Activated CD4-positive, alpha-beta T cell treated with anti-CD3 and anti-CD28 coated beads for 36 hours (primary cell): ENCODE measurements at regions of chr6 and their contacts with region 1.

Region 1: GRCh38 chr6:79078075-79079025 is at the start of gene PHIP:
- DNase-seq: peak; percentile 95
- ATAC-seq: peak; percentile 82
- H3K4me3 Mint-ChIP-seq: peak within 1 kb of the TSS; percentile 89
- H3K27ac Mint-ChIP-seq: peak within 1 kb of the TSS; percentile 96
- H3K4me1 Mint-ChIP-seq: peaks cover 34% of the 10 kb centered on the region
- H3K27me3 Mint-ChIP-seq: peaks cover 7% of the 10 kb centered on the region
- total RNA-seq, gene PHIP: 24.8 to 25.5 TPM

Region 2: DNA sequence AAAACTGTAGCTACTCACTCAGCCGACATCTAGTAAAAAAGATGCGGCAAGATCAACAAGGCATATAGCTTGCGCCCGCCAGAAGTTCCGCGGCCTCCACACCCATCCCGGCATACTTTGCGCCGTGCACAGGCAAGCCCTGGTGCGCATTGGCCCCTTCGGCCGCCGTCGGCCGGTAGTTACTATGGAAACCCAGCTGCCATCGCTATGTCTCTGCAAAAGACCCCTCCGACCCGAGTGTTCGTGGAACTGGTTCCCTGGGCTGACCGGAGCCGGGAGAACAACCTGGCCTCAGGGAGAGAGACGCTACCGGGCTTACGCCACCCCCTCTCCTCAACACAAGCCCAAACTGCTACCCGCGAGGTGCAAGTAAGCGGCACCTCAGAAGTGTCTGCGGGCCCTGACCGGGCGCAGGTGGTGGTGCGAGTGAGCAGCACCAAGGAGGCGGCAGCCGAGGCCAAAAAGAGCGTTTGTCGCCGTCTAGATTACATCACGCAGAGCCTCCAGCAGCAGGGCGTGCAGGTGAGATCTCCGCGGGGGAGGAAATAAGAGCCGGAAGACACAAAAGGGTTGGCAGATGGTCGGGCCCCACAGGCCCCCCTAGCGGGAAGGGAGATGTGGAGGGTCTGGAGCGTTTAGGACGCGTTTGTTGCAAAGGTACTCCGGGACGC is 210.8 kb before region 1 on chr6 and contains the start of gene IRAK1BP1:
- CTCF ChIA-PET with region 1: interaction called, 3 read pairs
- POLR2A ChIA-PET with region 1: no interaction called
- intact Hi-C with region 1: loop called (anchors 1 to 5 kb)
- DNase-seq: peak; percentile 93
- ATAC-seq: peak; percentile 99
- H3K4me3 Mint-ChIP-seq: peak within 1 kb of the TSS; percentile 92
- H3K27ac Mint-ChIP-seq: peak within 1 kb of the TSS; percentile 79
- H3K4me1 Mint-ChIP-seq: peaks cover 15% of the 10 kb centered on the region
- H3K27me3 Mint-ChIP-seq: no peaks in the 10 kb centered on the region
- total RNA-seq, gene IRAK1BP1: 1.6 to 2.7 TPM

Region 3: GRCh38 chr6:78908621-78909020 is 169.7 kb before region 1 on chr6:
- CTCF ChIA-PET with region 1: no interaction called
- POLR2A ChIA-PET with region 1: no interaction called
- intact Hi-C with region 1: no loop called
- DNase-seq: no peak
- ATAC-seq: no peak
- H3K4me3 Mint-ChIP-seq: no peak overlapping the region
- H3K27ac Mint-ChIP-seq: no peak overlapping the region
- H3K4me1 Mint-ChIP-seq: peaks cover 10% of the 10 kb centered on the region
- H3K27me3 Mint-ChIP-seq: peaks cover 31% of the 10 kb centered on the region

Region 4: DNA sequence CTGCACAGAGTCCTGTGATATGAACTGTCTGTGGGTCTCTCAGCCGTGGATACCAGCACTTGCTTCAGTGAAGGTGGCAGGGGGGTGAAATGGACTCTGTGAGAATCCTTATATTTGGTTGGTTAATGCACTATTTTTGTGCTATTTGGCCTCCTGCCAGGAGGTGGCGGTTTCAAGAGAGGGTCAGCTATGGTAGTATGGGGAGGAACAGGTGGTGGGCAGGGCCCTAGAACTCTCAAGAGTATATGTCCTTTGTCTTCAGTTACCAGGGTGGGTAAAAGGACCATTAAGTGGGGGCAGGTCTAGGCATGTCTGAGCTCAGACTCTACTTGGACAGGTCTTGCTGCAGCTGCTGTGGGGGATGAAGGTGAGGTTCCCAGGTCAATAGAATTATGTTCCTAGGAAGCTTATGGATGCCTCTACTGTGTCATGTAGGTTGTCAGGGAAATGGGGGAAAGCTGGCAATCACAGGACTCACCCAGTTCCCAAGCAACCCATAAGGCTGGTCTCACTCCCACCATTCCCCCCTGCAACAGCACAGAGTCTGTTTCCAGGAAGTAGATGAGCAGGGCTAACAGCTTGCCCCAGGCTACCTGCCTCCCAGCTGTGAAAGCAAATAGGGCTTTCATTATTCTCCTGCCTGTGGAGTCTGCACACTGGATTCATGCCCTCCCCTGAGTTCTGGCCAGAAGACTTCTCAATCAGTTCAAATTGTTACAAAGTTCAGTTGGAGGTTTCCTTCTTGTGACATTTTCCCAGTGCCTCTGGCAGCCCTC is 56.5 kb after region 1 on chr6:
- CTCF ChIA-PET with region 1: no interaction called
- POLR2A ChIA-PET with region 1: no interaction called
- intact Hi-C with region 1: no loop called
- DNase-seq: no peak
- ATAC-seq: no peak
- H3K4me3 Mint-ChIP-seq: no peak overlapping the region
- H3K27ac Mint-ChIP-seq: no peak overlapping the region
- H3K4me1 Mint-ChIP-seq: no peaks in the 10 kb centered on the region
- H3K27me3 Mint-ChIP-seq: peaks cover 25% of the 10 kb centered on the region

Region 5: GRCh38 chr6:79233611-79234149 is 155.3 kb after region 1 on chr6:
- CTCF ChIA-PET with region 1: no interaction called
- POLR2A ChIA-PET with region 1: no interaction called
- intact Hi-C with region 1: loop called (anchors 1 kb)
- DNase-seq: peak; percentile 83
- ATAC-seq: peak; percentile 68
- H3K4me3 Mint-ChIP-seq: peak overlapping the region; percentile 98
- H3K27ac Mint-ChIP-seq: peak overlapping the region; percentile 92
- H3K4me1 Mint-ChIP-seq: peaks cover 16% of the 10 kb centered on the region
- H3K27me3 Mint-ChIP-seq: peaks cover 2% of the 10 kb centered on the region

Region 6: GRCh38 chr6:79466207-79466834 is 388.0 kb after region 1 on chr6:
- CTCF ChIA-PET with region 1: no interaction called
- POLR2A ChIA-PET with region 1: no interaction called
- intact Hi-C with region 1: loop called in 1 of 2 experiments (anchors 5 kb)
- DNase-seq: no peak
- ATAC-seq: no peak
- H3K4me3 Mint-ChIP-seq: no peak overlapping the region
- H3K27ac Mint-ChIP-seq: no peak overlapping the region
- H3K4me1 Mint-ChIP-seq: no peaks in the 10 kb centered on the region
- H3K27me3 Mint-ChIP-seq: peaks cover 10% of the 10 kb centered on the region

Region 7: GRCh38 chr6:79672631-79673111 is 594.3 kb after region 1 on chr6:
- CTCF ChIA-PET with region 1: no interaction called
- POLR2A ChIA-PET with region 1: no interaction called
- intact Hi-C with region 1: loop called in 1 of 2 experiments (anchors 5 kb)
- DNase-seq: no peak
- ATAC-seq: peak; percentile 28
- H3K4me3 Mint-ChIP-seq: no peak overlapping the region
- H3K27ac Mint-ChIP-seq: peak overlapping the region; percentile 74
- H3K4me1 Mint-ChIP-seq: peaks cover 31% of the 10 kb centered on the region
- H3K27me3 Mint-ChIP-seq: no peaks in the 10 kb centered on the region

Region 8: GRCh38 chr6:80004173-80005072 is 926.1 kb after region 1 on chr6 and contains the start of gene TTK:
- CTCF ChIA-PET with region 1: no interaction called
- POLR2A ChIA-PET with region 1: no interaction called
- intact Hi-C with region 1: loop called in 1 of 2 experiments (anchors 1 kb)
- DNase-seq: peak; percentile 94
- ATAC-seq: peak; percentile 99
- H3K4me3 Mint-ChIP-seq: peak within 1 kb of the TSS; percentile 87
- H3K27ac Mint-ChIP-seq: peak within 1 kb of the TSS; percentile 95
- H3K4me1 Mint-ChIP-seq: peaks cover 13% of the 10 kb centered on the region
- H3K27me3 Mint-ChIP-seq: no peaks in the 10 kb centered on the region
- total RNA-seq, gene TTK: 39.1 to 47.2 TPM

Region 9: GRCh38 chr6:80163658-80164187 is 1085.4 kb after region 1 on chr6:
- CTCF ChIA-PET with region 1: no interaction called
- POLR2A ChIA-PET with region 1: no interaction called
- intact Hi-C with region 1: loop called in 1 of 2 experiments (anchors 5 kb)
- DNase-seq: peak; percentile 13
- ATAC-seq: peak; percentile 80
- H3K4me3 Mint-ChIP-seq: no peak overlapping the region
- H3K27ac Mint-ChIP-seq: no peak overlapping the region
- H3K4me1 Mint-ChIP-seq: peaks cover 2% of the 10 kb centered on the region
- H3K27me3 Mint-ChIP-seq: no peaks in the 10 kb centered on the region